Lower leg skin (tissue), 4 donors: ENCODE measurements at regions of chr11 and their contacts with region 1.

Region 1: DNA sequence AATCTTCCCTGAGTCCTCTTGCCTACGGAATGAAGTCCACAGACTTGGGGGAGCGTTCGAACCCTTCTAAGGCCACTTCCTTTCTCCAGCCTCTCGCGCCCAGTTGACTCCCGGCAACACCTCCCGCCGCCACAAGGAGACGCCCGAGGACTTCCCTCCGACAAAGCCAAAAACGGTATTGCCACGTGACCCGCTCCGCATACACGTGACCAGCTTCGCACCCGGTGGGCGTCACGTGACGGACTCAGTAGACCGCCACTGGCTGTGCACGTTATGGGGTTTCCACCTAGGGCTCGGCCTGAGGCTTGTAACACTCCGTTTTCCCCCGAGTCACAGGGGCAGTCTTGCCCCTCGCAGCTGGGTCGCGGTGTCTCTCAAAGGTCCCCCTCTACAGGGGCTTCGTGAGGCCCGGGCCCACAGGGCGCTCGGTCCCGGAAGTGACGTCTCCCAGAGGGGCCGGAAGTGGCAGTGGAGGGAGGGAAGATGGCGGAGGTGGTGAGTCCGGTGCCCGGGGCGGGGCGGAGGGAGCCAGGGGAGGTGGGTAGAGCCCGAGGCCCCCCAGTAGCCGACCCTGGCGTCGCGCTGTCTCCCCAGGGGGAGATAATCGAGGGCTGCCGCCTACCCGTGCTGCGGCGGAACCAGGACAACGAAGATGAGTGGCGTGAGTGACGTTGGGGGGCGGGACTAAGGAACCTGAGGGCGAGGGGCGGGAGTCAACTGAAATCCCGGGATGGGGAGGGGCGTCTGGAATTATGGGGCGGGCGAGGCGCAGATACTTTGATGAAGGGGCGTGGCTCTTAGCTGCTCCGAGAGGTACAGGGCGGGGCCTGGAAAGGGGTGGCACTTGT is at the start of gene KAT5:
- DNase-seq: peak; percentile 99 to 100
- H3K4me3 ChIP-seq: peak within 1 kb of the TSS; percentile 52
- CTCF ChIP-seq: peak in 2 of 3 donors; percentile 95 to 100
- POLR2A ChIP-seq: peak in 1 of 2 donors; percentile 74
- total RNA-seq, gene KAT5: 68.9 to 96.0 (median 85.7) TPM

Region 2: DNA sequence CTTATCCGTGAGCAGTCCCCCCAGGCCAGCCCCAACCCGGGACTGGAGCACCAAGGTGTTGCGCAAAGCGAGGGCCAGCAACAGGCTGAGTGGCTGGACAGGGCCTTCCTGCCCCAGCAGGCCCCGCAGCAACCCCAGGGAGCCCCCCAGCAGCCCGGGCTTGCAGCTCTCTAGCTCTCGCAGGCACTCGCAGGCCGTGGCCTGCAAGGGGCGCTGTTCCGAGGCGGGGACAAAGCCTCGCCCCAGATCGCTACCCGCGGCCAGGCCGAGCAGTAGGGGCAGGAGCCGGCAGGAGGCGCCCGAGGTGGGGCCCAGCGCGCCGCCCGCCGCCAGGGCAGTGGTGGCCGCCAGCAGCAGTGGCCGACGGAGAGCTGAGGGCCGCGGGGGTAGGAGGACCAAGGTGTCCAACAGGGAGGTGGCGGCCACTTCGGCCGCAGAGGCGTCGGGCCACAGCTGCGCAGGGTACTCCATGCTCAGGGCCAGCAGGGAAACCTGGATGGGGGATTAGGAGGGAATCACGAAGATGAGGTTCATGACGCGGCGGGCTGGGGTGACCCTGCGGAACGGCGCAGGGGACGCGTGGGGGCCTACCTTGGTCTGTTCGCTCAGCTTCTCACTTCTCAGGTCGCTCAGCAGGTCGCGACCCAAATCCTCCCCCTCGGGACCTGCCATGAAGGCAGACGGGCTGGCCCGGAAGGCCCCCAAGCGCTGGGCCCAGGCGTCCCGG is 68.0 kb after region 1 on chr11:
- intact Hi-C with region 1: loop called (anchors 10 kb)
- DNase-seq: peak in 1 of 2 donors; percentile 94
- H3K4me3 ChIP-seq: peak overlapping the region; percentile 76
- CTCF ChIP-seq: peak in 2 of 3 donors; percentile 16 to 92
- POLR2A ChIP-seq: no peak

Region 3: DNA sequence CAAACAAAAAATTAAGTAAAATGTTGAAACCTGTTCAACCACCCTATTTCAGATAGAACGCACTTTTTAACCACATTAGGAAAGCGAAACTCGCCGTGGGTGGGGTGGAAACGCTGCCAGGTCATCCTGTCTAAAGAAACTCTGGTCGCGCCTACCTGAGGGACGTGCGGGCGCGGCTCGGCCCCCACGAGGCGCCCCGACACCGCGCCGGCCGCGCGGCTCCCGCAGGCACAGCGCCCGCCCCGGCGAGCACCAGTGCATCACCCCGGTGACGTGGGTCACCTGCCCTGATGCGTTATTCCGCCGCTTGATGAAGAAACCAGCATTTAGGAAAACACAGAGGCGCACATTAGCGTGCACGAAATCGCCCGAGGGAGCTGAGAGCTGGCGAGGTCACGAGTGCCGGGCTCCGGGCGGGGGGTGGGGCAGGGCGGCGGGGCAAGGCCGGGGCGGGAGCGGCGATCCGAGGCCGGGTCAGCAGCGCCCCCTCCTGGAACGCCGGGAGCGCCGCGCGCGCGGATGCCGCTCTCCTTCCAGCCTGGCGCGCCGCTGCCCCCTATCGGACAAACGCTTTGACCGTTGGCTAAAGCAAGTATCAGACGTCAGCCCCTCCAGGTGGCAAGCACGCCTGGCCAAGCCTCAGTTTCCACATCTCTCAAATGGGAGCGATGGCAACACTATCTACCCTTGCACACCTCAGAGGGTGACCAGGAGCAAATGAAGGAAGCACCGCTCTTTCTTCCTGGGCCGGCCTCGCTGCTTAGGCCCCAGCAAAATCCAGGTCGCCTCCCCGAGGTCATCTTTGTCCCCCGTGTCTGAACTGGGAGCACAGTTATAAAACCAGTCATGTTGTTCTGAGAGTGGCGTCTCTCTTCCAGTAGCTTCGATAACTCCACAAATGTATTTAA is 106.1 kb after region 1 on chr11:
- intact Hi-C with region 1: loop called (anchors 5 kb)
- DNase-seq: peak; percentile 90 to 99
- H3K4me3 ChIP-seq: peak overlapping the region; percentile 52
- CTCF ChIP-seq: peak in 2 of 3 donors; percentile 62 to 97
- POLR2A ChIP-seq: no peak

Region 4: DNA sequence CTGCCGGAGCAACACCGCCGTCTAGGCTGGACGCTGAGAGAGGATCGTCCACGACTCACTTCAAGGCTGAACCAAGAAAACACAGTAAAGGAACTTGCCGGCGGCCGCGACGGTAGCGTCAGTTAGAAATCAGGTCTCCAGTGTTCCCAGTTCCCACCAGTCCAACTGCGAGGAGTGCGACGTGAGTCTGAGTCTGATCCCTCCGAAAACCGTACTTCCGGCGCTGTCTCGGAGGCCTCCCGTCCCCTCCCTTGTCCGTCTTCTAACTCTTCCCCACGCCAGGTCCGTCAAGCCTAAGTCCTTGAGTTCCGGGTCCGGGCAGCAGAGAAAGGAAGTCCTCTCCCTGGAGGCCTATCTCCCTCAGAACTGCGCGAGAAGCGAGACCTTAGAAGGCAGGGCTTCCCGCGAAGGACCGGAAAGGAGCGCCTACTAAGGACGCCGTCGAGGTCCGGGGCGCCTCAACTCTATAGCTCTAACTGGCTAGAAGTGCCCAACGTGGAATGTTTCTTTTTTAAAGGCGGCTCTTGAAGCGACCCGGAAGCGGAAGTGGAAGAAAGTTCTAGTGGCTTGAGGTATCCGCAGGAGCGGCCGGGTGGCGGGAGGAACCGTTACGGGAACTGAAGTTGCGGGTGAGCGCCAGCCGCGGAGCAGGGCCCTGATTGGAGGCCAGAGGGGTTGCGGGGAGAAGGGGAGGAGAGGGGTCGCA is 290.1 kb after region 1 on chr11 and contains the starts of genes BANF1 and EIF1AD:
- intact Hi-C with region 1: no loop called
- DNase-seq: peak; percentile 93 to 98
- H3K4me3 ChIP-seq: peak within 1 kb of the TSS; percentile 92
- CTCF ChIP-seq: peak in 1 of 3 donors; percentile 11
- POLR2A ChIP-seq: no peak
- total RNA-seq, gene BANF1: 29.3 to 41.0 (median 36.1) TPM
- total RNA-seq, gene EIF1AD: 48.3 to 66.0 (median 57.2) TPM